ENCODE measurements at regions of chr3 and their contacts with region 1.

Region 1: DNA sequence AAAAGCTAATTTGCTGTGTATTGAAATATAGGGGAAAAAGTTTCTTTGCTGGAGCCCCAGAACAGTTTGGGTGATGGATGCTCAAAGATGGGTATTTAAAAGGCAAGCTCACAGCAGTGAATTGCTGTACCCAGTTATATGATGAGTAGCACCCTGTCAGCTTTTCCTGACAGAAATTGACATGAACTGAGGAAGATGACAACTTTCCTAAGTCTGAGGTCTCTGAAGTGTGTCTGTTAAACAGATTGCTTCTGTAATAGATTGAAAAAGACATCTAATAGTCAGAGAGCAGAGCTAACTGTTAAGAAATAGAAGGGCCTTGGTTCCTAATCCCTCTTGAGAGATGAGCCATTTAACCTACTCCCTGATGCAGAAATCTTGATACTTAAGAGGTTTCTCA is 1278.0 kb upstream of the ALCAM start:
- DNase-seq: no peak
- H3K4me3 Mint-ChIP-seq: no peak overlapping the region
- H3K27ac Mint-ChIP-seq: no peak overlapping the region
- H3K4me1 Mint-ChIP-seq: no peaks in the 10 kb centered on the region
- H3K27me3 Mint-ChIP-seq: no peaks in the 10 kb centered on the region
- CTCF ChIP-seq: no peak

Region 2: GRCh38 chr3:104102386-104102785 is 13.6 kb after region 1 on chr3:
- CTCF ChIA-PET with region 1: interaction called, 11 read pairs
- POLR2A ChIA-PET with region 1: no interaction called
- intact Hi-C with region 1: no loop called
- DNase-seq: peak; percentile 64
- H3K4me3 Mint-ChIP-seq: no peak overlapping the region
- H3K27ac Mint-ChIP-seq: no peak overlapping the region
- H3K4me1 Mint-ChIP-seq: peaks cover 13% of the 10 kb centered on the region
- H3K27me3 Mint-ChIP-seq: no peaks in the 10 kb centered on the region
- CTCF ChIP-seq: peak; percentile 75

Region 3: DNA sequence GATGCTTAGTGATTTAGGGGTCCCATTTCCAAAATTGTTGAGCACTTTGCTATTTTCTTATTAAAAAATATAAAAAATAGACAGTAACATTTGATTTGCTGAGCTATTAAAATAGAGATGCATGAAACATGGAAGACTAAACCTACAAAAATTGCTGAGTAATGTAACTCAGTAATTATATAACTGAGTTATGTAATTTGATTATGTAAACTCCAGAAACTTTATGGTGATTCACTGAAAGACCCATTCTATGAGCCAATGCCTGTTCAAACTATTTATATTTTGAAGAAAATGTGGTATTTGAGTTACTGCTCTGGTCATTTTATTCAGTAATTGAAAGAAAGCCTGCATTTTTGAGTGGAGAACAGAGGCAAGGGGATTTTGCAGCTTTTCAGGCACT is 56.4 kb after region 1 on chr3:
- CTCF ChIA-PET with region 1: no interaction called
- POLR2A ChIA-PET with region 1: no interaction called
- intact Hi-C with region 1: no loop called
- DNase-seq: no peak
- H3K4me3 Mint-ChIP-seq: no peak overlapping the region
- H3K27ac Mint-ChIP-seq: no peak overlapping the region
- H3K4me1 Mint-ChIP-seq: no peaks in the 10 kb centered on the region
- H3K27me3 Mint-ChIP-seq: no peaks in the 10 kb centered on the region
- CTCF ChIP-seq: no peak

Measured in MCF 10A (cell line).